ENCODE measurements at regions of chr10 and their contacts with region 1.

Region 1: DNA sequence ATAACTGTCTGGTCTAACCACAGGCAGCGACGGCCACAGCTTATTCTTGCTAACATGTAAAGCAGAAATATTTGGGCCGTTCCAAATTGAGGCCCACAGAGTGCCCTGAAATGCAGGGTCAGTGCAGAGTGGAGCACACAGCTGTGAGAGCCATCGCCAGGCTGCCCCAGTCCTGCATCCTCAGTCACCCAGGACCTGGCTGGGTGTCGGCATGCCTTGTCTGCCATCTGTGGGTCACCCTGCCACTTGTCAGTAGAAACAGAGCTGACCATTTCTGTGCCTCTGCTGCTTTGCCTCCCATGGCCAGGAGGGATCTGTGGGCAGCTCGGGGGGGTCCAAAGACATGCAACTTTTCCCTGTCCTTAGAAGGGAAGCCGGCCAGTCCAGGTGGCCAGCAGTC is 57.3 kb upstream of the BTBD16 start:
- DNase-seq: peak; percentile 41 to 96 (median 60)

Region 2: DNA sequence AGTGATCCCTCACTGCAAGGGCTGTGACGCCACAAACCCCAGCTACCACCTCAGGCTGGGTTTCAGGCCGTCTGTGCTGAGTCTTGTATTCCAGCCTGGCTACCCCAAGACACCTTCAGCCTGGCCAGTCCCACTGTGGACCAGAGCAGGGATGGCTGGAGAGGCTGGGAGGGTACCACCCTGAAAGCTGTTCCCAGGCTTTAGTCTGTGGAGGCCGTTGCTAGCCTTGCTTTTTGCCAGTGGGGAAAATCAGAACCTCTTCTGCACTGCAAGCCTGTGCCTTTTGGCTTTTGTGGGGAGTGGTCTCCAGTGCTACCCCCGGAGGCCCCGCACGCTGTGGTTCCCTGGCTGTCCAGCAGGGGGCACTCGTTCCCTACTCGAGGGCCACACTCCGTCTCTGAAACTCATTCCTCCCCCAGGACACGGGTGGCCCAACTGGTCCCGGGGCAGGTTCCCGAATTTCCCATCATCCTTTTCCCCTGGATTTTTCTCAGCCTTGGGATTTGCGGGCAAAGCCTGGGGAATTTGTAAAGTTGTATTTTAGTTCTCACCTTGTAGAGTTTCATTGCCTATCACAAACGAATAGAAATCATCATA is 71.0 kb before region 1 on chr10:
- intact Hi-C with region 1: loop called (anchors 1 kb)
- DNase-seq: peak in 8 of 10 donors; percentile 64 to 95 (median 80)

Region 3: GRCh38 chr10:122191936-122192541 is 21.7 kb before region 1 on chr10:
- intact Hi-C with region 1: no loop called
- DNase-seq: peak; percentile 18 to 92 (median 45)

Region 4: GRCh38 chr10:122286867-122287266 is 73.1 kb after region 1 on chr10:
- intact Hi-C with region 1: no loop called
- DNase-seq: peak; percentile 43 to 97 (median 63)

Measured in posterior cingulate gyrus (tissue), 11 donors.